GM23248 (cell line): ENCODE measurements at regions of chr6 and their contacts with region 1.

Region 1: DNA sequence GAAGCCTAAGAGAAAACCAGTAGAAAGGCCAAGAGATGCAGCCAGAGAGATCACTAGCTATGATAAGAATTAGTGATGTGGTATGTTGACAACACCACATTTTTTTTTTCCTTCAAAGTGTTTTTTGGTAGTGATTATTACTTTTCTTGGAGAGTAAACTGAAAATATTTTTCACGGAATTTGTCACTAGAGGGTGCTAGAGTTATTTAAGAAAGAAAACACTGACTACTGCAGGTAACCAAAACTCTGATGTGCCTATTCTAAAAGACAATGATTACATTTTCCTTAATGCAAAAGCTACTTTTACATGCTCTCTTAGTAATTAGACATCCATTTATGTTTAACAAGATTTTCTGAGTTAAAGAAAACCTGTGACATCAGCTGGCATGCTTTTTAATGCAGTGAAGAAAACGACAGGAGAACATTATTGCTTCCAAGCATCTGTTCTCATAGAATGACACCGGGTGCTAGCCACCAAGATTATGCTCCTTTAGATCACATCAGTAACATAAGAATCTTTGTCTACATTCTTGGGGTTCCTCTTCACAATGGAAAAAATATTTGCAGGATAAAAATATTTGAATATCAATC is 28.8 kb downstream of the RWDD2A start:
- DNase-seq: peak; percentile 58
- H3K4me3 ChIP-seq: no peak overlapping the region
- H3K27ac ChIP-seq: no peak overlapping the region
- H3K4me1 ChIP-seq: no peaks in the 10 kb centered on the region
- H3K27me3 ChIP-seq: no peaks in the 10 kb centered on the region

Region 2: DNA sequence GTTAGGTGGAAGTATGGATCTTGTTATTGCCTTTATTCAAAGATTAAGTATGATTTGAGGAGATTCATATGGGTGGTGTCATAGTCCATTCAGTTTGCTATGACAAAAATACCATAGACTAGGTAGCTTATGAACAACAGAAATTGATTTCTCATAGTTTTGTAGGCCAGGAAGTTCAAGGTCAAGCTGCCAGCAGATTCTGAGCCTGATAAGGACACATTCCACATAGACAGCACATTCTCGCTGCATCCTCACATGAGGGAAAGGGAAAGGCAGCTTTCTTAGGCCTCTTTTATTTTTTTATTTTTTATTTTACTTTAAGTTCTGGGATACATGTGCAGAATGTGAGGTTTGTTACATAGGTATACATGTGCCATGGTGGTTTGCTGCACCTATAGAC is 181.2 kb after region 1 on chr6:
- in situ Hi-C with region 1: loop called (anchors 10 kb)
- DNase-seq: no peak
- H3K4me3 ChIP-seq: no peak overlapping the region
- H3K27ac ChIP-seq: no peak overlapping the region
- H3K4me1 ChIP-seq: no peaks in the 10 kb centered on the region
- H3K27me3 ChIP-seq: no peaks in the 10 kb centered on the region

Region 3: DNA sequence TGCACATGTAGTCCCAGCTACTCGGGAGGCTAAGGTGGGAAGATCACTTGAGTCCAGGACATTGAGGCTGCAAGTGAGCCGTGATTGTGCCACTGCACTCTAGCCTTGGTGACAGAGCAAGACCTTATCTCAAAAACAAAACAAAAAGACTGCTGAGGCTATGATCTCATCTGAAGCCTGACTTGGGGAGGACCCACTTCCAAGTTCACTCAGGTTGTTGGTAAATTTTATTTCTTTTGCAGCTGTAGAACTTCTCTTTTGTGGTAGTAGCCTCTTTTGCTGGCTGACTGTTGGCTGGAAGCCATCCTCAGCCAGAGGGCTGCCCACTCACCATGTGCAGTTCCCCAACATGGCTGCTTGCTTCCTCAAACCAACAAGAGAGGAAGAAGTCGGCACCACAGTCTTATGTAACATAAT is 245.6 kb after region 1 on chr6:
- in situ Hi-C with region 1: no loop called
- DNase-seq: no peak
- H3K4me3 ChIP-seq: no peak overlapping the region
- H3K27ac ChIP-seq: no peak overlapping the region
- H3K4me1 ChIP-seq: no peaks in the 10 kb centered on the region
- H3K27me3 ChIP-seq: no peaks in the 10 kb centered on the region